GM10248 (cell line): ENCODE measurements at regions of chr19 and their contacts with region 1.

Region 1: GRCh38 chr19:10259162-10259905 is 7.3 kb downstream of the MRPL4 start:
- DNase-seq: peak; percentile 81
- CTCF ChIP-seq: peak; percentile 75

Region 2: DNA sequence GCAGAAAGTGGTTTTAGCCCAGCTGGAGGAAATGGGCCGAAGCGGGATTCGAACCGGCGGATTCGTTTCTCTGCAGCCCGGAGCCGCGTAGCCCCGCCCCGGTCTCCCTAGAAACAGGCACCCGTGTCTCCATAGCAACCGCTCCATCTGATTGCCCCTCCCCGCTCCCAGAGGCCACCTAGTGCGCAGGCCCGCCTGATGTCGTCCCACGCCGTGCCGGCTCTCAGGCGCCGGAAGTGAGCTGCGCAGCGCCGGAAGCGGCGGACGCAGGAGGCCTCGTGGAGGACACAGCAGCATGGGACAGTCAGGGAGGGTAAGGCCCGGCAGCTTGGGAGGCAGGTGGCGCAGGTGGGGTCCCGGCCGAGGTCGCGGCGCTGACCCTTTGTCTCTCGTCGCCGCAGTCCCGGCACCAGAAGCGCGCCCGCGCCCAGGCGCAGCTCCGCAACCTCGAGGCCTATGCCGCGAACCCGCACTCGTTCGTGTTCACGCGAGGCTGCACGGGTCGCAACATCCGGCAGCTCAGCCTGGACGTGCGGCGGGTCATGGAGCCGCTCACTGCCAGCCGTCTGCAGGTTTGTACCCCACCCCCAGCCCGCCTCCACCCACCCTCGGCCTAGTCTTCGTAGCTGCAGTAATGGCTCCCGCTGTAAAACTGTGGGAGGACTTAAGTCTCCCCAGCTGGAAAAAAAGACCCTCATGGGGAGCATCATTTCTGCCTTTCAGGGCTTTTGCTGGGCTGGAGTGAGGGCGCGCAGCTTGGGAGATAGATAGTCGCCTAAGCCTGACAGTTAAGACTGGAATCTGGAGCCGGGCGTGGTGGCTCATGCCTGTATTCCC is 153.0 kb before region 1 on chr19 and contains the start of gene PPAN:
- CTCF ChIA-PET with region 1: interaction called, 12 read pairs
- POLR2A ChIA-PET with region 1: no interaction called
- DNase-seq: peak; percentile 98
- CTCF ChIP-seq: no peak

Region 3: GRCh38 chr19:10269333-10270179 is 10.2 kb after region 1 on chr19:
- CTCF ChIA-PET with region 1: interaction called, 127 read pairs
- POLR2A ChIA-PET with region 1: interaction called, 15 read pairs
- DNase-seq: peak; percentile 82
- CTCF ChIP-seq: peak; percentile 98

Region 4: GRCh38 chr19:10286803-10287737 is 27.7 kb after region 1 on chr19 and contains the start of gene ICAM4:
- CTCF ChIA-PET with region 1: interaction called, 25 read pairs
- POLR2A ChIA-PET with region 1: interaction called, 8 read pairs
- DNase-seq: peak; percentile 59
- CTCF ChIP-seq: no peak

Region 5: GRCh38 chr19:10388957-10389356 is 129.6 kb after region 1 on chr19:
- CTCF ChIA-PET with region 1: interaction called, 484 read pairs
- POLR2A ChIA-PET with region 1: interaction called, 9 read pairs
- DNase-seq: peak; percentile 66
- CTCF ChIP-seq: peak; percentile 88

Region 6: GRCh38 chr19:10424011-10424637 is 164.8 kb after region 1 on chr19:
- CTCF ChIA-PET with region 1: interaction called, 14 read pairs
- POLR2A ChIA-PET with region 1: no interaction called
- DNase-seq: peak; percentile 70
- CTCF ChIP-seq: peak; percentile 92